Left ventricle myocardium inferior (tissue), 1 donor: ENCODE measurements at regions of chr1 and their contacts with region 1.

Region 1: DNA sequence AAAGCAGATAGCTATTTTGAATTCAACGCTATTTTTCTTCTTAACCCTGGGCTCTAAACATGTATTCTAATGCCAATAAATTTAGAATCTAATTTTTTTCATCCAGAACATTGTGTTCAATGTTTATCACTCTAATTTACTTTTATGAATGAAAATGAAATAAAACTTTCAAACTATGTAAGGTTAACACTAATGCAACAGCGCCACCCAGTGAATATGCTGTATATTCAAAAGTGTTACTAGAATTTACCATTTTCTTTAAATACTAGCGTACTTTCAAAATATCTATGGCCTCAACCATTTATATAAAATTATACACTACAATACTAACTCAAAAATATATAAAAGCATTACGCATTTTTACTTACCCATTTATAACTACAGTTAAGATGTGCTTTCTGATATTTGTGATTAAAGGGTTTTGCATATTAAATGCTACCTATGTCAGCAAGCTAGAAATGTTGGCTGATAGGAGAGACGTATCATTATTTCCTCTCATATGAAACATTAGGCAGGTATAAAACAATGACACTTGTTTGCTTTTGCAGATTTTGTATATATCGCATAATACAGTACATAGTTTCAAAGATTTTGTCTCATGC is 5.9 kb upstream of the NUF2 start:
- DNase-seq: no peak
- H3K4me3 ChIP-seq: no peak overlapping the region
- H3K27ac ChIP-seq: no peak overlapping the region
- H3K4me1 ChIP-seq: peaks cover 8% of the 10 kb centered on the region
- H3K27me3 ChIP-seq: no peaks in the 10 kb centered on the region
- CTCF ChIP-seq: peak; percentile 75

Region 2: GRCh38 chr1:162854245-162854882 is 461.5 kb before region 1 on chr1:
- intact Hi-C with region 1: loop called (anchors 5 kb)
- DNase-seq: peak; percentile 24
- H3K4me3 ChIP-seq: no peak overlapping the region
- H3K27ac ChIP-seq: no peak overlapping the region
- H3K4me1 ChIP-seq: no peaks in the 10 kb centered on the region
- H3K27me3 ChIP-seq: no peaks in the 10 kb centered on the region
- CTCF ChIP-seq: peak; percentile 77

Region 3: DNA sequence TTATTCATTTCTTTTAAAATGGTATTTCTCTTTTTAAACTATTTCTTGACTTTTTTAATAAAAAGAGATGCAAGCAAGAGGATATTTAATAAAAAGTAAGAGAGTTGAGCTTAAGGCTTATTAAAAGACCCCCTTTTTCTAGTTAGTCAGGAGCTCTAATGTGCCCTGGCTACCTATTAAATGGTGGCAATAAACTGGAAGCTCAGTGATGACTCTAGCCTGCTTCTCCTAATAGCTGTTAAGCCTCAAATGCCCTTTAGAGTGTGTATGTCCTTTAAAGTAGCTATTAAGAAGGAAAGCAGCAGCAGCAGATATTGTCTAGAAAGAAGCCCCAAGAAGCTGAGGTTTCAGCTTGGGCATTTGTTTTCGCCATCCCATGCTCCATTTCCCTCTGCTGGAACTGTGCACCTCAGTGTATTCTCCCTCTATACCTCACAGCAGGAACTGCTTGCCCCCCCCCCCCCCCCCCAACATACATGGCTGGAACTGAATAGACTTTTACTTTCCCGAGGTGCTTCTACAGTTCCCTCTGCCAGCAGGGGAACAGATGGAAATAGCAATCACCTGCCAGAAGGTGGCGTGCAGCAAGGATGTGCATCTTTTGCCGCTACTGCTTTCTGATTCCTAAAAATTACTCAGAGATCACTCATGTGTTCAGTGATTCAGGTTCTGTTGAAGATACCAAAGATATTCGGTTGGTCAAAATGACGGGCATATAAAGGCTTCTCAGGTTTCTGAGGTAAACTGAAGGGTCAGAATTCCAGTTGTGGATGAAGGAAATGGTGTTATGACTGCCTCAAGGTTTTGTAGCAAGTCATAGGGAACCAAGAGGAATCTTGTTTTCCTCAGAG is 244.2 kb before region 1 on chr1:
- intact Hi-C with region 1: loop called (anchors 5 kb)
- DNase-seq: peak; percentile 39
- H3K4me3 ChIP-seq: peak overlapping the region; percentile 57
- H3K27ac ChIP-seq: no peak overlapping the region
- H3K4me1 ChIP-seq: peaks cover 13% of the 10 kb centered on the region
- H3K27me3 ChIP-seq: peaks cover 42% of the 10 kb centered on the region
- CTCF ChIP-seq: peak; percentile 74

Region 4: DNA sequence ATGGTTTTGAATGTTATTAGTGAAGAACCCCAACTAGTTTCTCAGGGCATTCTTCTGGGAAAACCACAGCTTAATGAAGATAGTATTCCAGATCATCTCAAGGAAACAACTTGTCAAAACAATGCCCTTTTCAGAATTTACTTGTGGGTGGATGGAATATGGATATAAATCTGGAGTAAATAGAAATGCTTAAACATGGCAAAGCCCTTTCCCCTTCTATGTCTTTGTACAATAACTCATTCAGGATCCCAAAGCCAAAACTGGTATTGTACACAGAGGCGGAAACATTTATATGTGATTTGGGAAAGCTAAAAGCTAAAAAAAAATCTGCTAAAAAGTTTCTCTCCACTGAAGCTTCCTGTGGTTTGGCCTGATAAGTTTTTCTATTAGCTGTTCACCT is 57.7 kb before region 1 on chr1:
- intact Hi-C with region 1: no loop called
- DNase-seq: no peak
- H3K4me3 ChIP-seq: no peak overlapping the region
- H3K27ac ChIP-seq: peak overlapping the region; percentile 47
- H3K4me1 ChIP-seq: no peaks in the 10 kb centered on the region
- H3K27me3 ChIP-seq: no peaks in the 10 kb centered on the region
- CTCF ChIP-seq: no peak

Region 5: DNA sequence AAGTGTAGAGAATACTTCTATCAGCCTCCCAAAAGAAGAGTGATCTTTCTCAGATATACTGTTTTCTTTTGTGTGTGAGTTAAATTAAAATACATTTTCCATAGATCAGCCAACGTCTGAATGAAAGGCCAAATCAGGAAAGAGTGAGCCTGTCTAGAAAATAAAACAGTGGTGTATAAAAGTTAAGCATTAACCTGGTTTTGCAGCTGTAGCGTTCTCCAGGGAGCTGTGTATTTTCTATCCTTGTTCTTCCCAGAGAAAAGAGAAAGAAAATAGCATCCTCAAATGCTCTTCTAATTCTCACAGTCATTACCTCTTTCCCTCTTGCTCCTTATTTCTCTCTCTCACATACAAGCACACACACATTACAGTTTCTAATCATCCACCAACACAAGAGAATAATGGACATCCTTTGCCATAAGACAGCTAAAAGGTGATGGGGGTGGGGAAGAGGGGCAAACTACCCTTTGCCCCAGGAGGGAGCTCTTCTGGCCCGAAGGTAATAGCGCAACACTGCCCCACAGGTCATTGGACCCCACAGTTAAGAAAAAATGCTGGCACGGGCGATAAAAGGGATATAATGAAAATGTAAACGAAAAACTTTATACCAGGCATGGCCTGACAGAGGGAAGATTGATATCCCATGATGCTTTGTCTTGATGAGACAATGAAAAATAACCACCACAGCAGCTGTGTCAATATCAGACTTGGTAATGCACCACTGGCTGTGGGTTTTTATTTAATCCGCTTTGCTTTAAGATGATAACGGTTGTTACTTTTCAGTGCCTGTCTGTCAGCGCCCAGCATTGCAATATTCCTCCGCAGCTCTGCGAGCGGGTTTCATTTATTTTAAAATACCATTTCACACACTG is 156.1 kb after region 1 on chr1:
- intact Hi-C with region 1: no loop called
- DNase-seq: no peak
- H3K4me3 ChIP-seq: no peak overlapping the region
- H3K27ac ChIP-seq: no peak overlapping the region
- H3K4me1 ChIP-seq: no peaks in the 10 kb centered on the region
- H3K27me3 ChIP-seq: peaks cover 6% of the 10 kb centered on the region
- CTCF ChIP-seq: no peak